ENCODE measurements at regions of chr1 and their contacts with region 1.

Region 1: DNA sequence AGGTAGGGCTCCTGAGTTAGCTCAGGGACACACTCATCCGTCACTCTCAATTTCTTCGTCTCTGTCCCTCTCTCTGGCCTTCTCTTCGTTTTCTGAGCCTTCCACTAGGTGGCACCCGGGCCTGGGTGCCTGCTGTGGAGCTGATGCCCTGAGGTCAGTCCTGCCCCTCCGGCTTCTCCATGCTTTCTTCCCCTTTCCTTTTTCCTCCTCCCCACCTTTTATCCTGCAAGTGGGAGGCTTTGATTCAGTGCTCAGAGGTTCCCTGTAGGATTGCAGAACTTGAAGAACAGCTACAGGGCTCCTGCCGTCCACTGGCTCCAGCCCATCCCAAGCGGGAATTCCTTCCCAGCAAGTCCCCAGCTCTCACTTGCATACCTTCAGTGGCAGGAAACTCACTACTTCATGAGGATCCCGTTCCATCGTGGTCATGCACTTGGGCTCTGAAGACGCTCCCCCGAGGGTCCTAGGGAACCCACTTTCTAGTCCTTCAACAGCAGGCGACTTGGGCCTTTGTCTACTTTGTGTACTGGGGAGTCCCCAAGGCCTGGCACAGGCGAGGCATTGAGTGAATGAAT is 45.6 kb downstream of the SRRM1 start:
- DNase-seq: peak; percentile 70
- H3K4me3 ChIP-seq: no peak overlapping the region
- H3K27ac ChIP-seq: no peak overlapping the region
- H3K4me1 ChIP-seq: peaks cover 9% of the 10 kb centered on the region
- H3K27me3 ChIP-seq: no peaks in the 10 kb centered on the region
- CTCF ChIP-seq: peak; percentile 88 to 92
- POLR2A ChIP-seq: no peak

Region 2: GRCh38 chr1:24705260-24706073 is 16.8 kb after region 1 on chr1:
- CTCF ChIA-PET with region 1: interaction called, 58 read pairs
- POLR2A ChIA-PET with region 1: interaction called, 5 read pairs
- dilution Hi-C with region 1: no loop called
- intact Hi-C with region 1: no loop called
- DNase-seq: peak; percentile 97
- H3K4me3 ChIP-seq: peak overlapping the region in 1 of 3 experiments; percentile 12
- H3K27ac ChIP-seq: peak overlapping the region; percentile 76
- H3K4me1 ChIP-seq: peaks cover 19% of the 10 kb centered on the region
- H3K27me3 ChIP-seq: no peaks in the 10 kb centered on the region
- CTCF ChIP-seq: no peak
- POLR2A ChIP-seq: peak; percentile 62

Region 3: GRCh38 chr1:24727501-24728216 is 39.0 kb after region 1 on chr1:
- CTCF ChIA-PET with region 1: interaction called, 28 read pairs
- POLR2A ChIA-PET with region 1: no interaction called
- dilution Hi-C with region 1: no loop called
- intact Hi-C with region 1: loop called (anchors 1 kb)
- DNase-seq: no peak
- H3K4me3 ChIP-seq: no peak overlapping the region
- H3K27ac ChIP-seq: no peak overlapping the region
- H3K4me1 ChIP-seq: peaks cover 45% of the 10 kb centered on the region
- H3K27me3 ChIP-seq: no peaks in the 10 kb centered on the region
- CTCF ChIP-seq: no peak
- POLR2A ChIP-seq: no peak

Region 4: DNA sequence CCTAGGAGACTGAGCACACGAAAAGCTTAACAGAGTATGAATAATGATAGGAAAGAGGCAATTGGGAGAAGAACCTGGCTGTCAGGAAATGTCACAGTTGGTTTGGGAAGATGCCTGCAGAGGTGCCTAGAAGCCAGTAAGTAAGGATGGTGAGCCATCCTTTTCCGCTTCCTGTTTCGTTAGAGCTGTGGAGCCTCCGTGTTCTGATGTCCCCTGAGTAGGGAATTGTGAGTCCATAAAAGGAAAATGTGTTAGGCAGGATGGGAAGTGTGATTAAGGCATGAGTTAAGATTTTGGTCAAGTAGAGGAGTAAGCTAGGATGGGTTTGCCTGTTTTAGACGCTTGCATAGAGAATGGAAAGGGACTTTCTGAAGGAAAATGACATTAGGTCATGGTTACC is 65.5 kb after region 1 on chr1:
- CTCF ChIA-PET with region 1: interaction called, 29 read pairs
- POLR2A ChIA-PET with region 1: interaction called, 4 read pairs
- dilution Hi-C with region 1: no loop called
- intact Hi-C with region 1: no loop called
- DNase-seq: peak; percentile 85
- H3K4me3 ChIP-seq: no peak overlapping the region
- H3K27ac ChIP-seq: peak overlapping the region; percentile 49
- H3K4me1 ChIP-seq: peaks cover 35% of the 10 kb centered on the region
- H3K27me3 ChIP-seq: no peaks in the 10 kb centered on the region
- CTCF ChIP-seq: no peak
- POLR2A ChIP-seq: no peak

Region 5: DNA sequence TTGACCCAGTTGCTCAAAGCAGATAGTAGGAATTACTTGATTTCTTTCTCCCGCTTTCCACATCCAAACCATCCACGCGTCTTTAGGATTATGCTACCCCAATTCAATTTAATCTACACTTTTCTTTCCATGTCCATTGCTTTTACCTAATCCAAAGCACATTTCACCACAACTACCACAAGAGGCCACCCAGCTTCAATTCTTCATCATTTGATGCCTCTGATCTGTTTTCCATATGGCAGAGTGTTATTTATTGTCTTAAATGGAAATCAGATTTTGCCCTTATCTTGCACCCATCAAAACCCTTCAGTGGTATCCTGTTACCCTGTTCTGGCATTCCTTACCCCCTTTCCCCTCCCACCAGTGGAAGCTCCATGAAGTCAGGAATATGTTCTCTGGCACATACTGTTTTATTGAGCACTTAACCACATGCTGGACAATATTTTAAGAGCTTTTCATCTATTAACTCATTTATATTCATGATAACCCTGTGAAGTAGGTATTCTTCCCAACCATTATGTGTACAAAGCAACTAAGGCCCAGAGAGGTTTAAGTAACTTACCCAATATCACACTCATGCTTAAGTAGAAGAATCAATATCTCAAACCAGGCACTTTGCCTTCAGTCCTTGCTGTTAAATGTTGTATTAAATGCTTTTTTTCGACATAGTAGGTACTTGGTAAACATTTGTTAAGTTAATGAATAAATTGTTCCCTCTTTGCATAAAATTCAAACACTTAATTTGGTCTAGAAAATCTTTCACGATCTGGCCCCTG is 91.2 kb after region 1 on chr1:
- CTCF ChIA-PET with region 1: interaction called, 15 read pairs
- POLR2A ChIA-PET with region 1: no interaction called
- dilution Hi-C with region 1: no loop called
- intact Hi-C with region 1: no loop called
- DNase-seq: no peak
- H3K4me3 ChIP-seq: no peak overlapping the region
- H3K27ac ChIP-seq: no peak overlapping the region
- H3K4me1 ChIP-seq: peaks cover 2% of the 10 kb centered on the region
- H3K27me3 ChIP-seq: no peaks in the 10 kb centered on the region
- CTCF ChIP-seq: no peak
- POLR2A ChIP-seq: no peak

Region 6: GRCh38 chr1:24805534-24806301 is 117.0 kb after region 1 on chr1:
- CTCF ChIA-PET with region 1: interaction called, 19 read pairs
- POLR2A ChIA-PET with region 1: interaction called, 3 read pairs
- dilution Hi-C with region 1: no loop called
- intact Hi-C with region 1: no loop called
- DNase-seq: peak; percentile 95
- H3K4me3 ChIP-seq: peak overlapping the region in 1 of 3 experiments; percentile 52
- H3K27ac ChIP-seq: peak overlapping the region; percentile 86
- H3K4me1 ChIP-seq: peaks cover 61% of the 10 kb centered on the region
- H3K27me3 ChIP-seq: no peaks in the 10 kb centered on the region
- CTCF ChIP-seq: no peak
- POLR2A ChIP-seq: peak; percentile 34

Region 7: DNA sequence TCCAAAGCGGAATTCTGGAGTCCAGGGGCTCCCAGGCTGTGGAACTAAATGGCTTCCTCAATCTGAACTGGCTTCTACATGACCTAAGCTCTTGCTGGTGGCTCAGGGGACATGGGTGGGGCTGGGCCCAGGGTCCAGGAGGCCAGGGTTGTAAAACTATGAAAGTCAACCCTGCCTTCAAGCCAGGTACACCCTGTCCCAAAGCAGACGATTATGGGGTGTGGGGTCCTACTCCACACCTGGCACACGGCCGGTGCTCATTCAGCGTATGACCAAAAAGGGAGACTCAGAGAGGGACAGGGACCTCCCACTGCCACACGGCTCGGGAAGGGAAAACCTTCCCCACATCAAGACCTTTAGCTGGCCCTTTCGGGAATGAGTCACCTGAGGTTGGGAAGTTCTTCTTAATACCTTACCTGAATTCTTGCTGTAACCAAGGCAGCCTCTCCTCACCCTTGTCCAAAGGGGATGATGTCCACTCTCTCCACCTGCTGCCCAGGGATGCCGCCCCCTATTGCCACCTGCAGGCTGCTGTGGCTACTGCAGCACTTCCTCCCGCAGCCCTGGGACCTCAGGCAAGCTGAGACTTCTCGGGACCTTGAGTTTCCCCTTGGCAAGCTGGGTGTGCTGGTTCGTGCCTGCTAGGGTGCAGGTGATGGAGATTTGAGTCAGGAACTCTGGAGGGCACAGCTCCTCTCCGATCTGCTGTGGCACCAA is 209.2 kb after region 1 on chr1:
- CTCF ChIA-PET with region 1: interaction called, 4 read pairs
- POLR2A ChIA-PET with region 1: no interaction called
- dilution Hi-C with region 1: no loop called
- intact Hi-C with region 1: loop called (anchors 1 kb)
- DNase-seq: peak; percentile 46
- H3K4me3 ChIP-seq: no peak overlapping the region
- H3K27ac ChIP-seq: no peak overlapping the region
- H3K4me1 ChIP-seq: no peaks in the 10 kb centered on the region
- H3K27me3 ChIP-seq: peaks cover 0 to 5% of the 10 kb centered on the region in 2 experiments
- CTCF ChIP-seq: peak; percentile 79 to 93
- POLR2A ChIP-seq: no peak